ENCODE measurements at regions of chr5 and their contacts with region 1.

Region 1: DNA sequence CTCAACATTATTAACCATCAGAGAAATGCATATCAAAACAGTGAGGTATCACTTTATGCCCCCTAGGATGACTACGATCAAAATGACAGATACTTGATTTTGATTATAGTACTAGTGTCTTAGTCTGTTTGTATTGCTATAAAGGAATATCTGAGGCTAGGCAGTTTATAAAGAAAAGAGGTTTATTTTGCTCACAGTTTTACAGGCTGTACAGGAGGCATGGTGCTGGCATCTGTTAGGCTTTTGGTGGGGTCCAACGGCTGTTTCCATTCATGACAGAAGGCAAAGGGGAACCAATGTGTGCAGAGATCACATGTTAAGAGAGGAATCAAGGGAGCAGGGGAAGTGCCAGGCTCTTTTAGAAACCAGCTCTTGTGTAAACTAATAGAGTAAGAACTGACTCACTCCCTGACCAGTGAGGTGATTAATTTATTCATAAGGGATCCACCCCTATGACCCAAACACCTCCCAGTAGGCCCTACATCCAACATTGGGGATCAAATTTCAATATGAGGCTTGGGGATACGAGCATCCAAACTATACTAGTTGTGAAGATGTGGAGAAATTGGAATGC is 16.0 kb upstream of the AFF4 start:
- DNase-seq: no peak
- ATAC-seq: no peak
- H3K4me3 Mint-ChIP-seq: no peak overlapping the region
- H3K27ac Mint-ChIP-seq: no peak overlapping the region
- H3K4me1 Mint-ChIP-seq: no peaks in the 10 kb centered on the region
- H3K27me3 Mint-ChIP-seq: no peaks in the 10 kb centered on the region

Region 2: DNA sequence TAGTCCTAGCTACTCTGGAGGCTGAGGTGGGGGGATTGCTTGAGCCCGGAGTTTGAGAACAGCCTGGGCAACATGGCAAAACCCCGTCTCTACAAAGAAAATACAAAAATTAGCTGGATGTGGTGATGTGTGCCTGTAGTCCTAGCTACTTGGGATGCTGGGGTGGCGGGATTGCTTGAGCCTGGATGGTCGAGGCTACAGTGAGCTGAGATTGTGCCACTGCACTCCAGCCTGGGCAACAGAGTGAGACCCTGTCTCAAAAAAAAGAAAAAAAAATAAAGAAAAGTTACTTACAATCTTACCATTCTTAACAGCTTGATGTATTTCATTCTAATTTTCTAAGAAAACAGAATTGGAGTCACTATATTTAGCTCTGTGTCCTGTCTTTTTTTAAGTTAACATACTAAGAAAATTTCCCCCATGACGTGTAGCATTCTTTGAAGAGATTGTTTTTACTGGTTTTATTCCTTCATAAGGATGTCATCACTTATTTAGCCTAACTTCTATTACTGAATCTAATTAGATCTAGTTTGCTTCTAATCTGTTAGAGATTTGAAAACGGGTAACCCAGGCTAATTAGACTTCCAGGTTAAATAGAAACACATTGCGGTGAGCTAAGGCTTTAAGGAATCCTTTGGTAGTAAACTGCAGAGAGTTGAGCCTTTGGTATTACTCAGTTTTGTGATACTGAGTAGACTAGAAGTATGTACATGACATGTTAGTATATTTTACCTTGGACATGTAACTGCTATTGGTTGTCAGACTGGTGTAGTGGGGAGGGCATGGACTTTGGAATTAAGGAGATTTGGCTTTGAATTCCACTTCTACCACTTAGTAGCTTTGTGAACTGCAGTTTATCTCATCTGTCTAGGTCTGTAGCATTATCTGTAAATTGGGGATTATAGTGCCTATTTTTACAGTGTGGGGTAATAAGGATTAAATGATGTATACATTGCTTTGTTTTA is 96.4 kb after region 1 on chr5:
- CTCF ChIA-PET with region 1: no interaction called
- POLR2A ChIA-PET with region 1: interaction called, 12 read pairs
- intact Hi-C with region 1: no loop called
- DNase-seq: no peak
- ATAC-seq: no peak
- H3K4me3 Mint-ChIP-seq: no peak overlapping the region
- H3K27ac Mint-ChIP-seq: no peak overlapping the region
- H3K4me1 Mint-ChIP-seq: peaks cover 27% of the 10 kb centered on the region
- H3K27me3 Mint-ChIP-seq: no peaks in the 10 kb centered on the region

Region 3: DNA sequence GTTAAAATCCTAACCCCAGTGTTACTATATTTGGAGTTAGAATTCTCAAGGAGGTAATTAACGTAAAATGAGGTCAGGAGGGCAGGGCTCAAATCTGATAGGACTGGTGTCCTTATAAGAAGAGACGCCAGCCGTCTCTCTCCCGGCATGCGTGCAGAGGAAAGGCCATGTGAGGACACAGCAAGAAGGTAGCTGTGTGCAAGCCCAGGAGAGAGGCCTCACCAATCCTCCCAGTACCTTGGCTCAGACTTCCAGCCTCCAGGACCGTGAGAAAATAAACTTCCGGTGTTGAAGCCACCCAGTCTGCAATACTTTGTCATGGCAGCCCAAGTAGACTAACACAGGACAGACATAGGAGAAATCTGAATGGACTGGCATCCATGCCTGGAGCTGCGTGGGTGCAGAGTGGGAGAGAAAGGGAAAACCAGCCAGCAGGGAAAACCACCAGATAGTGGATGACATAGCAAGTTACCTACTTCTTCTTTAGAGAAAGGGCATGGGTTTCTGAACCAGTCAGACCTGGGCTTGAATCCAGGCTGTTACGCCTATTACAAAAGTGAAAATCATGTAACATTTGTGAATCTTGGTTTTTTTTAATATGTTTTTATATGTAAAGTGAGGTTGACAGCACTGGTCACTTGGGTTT is 543.7 kb after region 1 on chr5:
- CTCF ChIA-PET with region 1: no interaction called
- POLR2A ChIA-PET with region 1: no interaction called
- intact Hi-C with region 1: no loop called
- DNase-seq: no peak
- ATAC-seq: no peak
- H3K4me3 Mint-ChIP-seq: no peak overlapping the region
- H3K27ac Mint-ChIP-seq: no peak overlapping the region
- H3K4me1 Mint-ChIP-seq: no peaks in the 10 kb centered on the region
- H3K27me3 Mint-ChIP-seq: peaks cover 5% of the 10 kb centered on the region